Dorsolateral prefrontal cortex (tissue), 120 donors: ENCODE measurements at regions of chr6 and their contacts with region 1.

Region 1: GRCh38 chr6:43506667-43507471 is 3.3 kb downstream of the LRRC73 start:
- DNase-seq: peak in 9 of 10 donors; percentile 68 to 85 (median 83)
- H3K4me3 ChIP-seq: peak overlapping the region in 3 of 59 donors; percentile 11 to 16 (median 13)
- H3K27ac ChIP-seq: peak overlapping the region in 51 of 59 donors; percentile 23 to 85 (median 69)
- H3K27me3 ChIP-seq: no peaks in the 10 kb centered on the region
- CTCF ChIP-seq: peak; percentile 85 to 99 (median 96)

Region 2: GRCh38 chr6:42563697-42564505 is 943.0 kb before region 1 on chr6 and contains the start of gene UBR2:
- intact Hi-C with region 1: no loop called
- DNase-seq: peak; percentile 90 to 99 (median 98)
- H3K4me3 ChIP-seq: peak within 1 kb of the TSS; percentile 57 to 100 (median 92)
- H3K27ac ChIP-seq: peak within 1 kb of the TSS; percentile 69 to 100 (median 97)
- H3K27me3 ChIP-seq: no peaks in the 10 kb centered on the region
- CTCF ChIP-seq: peak in 55 of 56 donors; percentile 29 to 86 (median 67)
- total RNA-seq, gene UBR2: 29.5 to 56.9 (median 37.2) TPM

Region 3: GRCh38 chr6:43174263-43175112 is 332.4 kb before region 1 on chr6:
- intact Hi-C with region 1: loop called in 1 of 2 experiments (anchors 5 kb)
- DNase-seq: peak; percentile 88 to 99 (median 98)
- H3K4me3 ChIP-seq: peak overlapping the region; percentile 29 to 98 (median 81)
- H3K27ac ChIP-seq: peak overlapping the region; percentile 50 to 98 (median 90)
- H3K27me3 ChIP-seq: no peaks in the 10 kb centered on the region
- CTCF ChIP-seq: peak in 50 of 56 donors; percentile 8 to 67 (median 42)

Region 4: DNA sequence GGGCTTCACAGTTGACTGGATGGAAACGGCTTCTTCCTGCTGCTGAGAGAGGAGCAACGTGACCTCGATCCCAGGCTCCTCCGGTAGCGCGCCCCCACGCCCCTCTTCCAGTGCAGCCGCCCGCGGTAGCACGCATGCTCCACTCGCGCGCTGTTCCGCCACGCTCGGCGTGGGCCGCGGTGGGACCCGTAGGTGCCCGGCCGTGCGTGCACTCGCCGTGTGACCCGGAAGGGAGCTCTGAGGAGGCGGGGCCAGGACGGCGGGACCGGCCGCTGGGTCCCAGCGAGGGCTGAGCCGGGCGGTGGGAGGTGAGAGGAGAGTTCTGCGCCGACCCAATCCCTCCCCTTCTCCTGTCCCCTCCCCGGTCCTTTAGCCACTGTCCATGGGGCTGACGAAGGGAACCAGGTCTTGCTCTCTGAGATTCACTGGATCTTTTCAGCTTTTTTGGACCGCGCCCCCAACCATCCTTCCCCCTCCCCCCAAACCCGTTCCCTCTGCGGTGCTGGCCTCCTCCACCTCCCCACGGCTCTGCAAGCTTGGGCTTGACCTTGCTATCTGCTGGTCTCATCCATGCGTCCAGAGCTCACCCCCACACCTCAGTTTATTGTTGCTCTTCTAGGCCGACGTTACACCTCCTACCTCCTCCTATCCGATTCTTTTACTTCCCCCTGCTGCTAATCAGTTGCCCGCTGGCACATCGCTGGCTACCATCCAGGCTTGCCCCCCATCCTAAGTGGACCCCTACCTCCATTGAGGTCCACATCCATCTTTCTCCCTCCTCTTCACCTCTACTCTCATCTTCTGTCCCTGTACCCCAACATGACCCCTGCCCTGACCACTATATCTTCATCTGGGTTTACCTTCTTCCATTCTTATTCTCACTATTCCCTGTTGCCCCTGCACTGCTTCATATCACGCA is 324.7 kb before region 1 on chr6 and contains the start of gene CUL9:
- intact Hi-C with region 1: loop called in 1 of 2 experiments (anchors 10 kb)
- DNase-seq: peak; percentile 74 to 95 (median 86)
- H3K4me3 ChIP-seq: peak within 1 kb of the TSS; percentile 57 to 93 (median 83)
- H3K27ac ChIP-seq: peak within 1 kb of the TSS in 57 of 59 donors; percentile 24 to 91 (median 82)
- H3K27me3 ChIP-seq: no peaks in the 10 kb centered on the region
- CTCF ChIP-seq: peak in 43 of 56 donors; percentile 6 to 58 (median 34)
- total RNA-seq, gene CUL9: 57.4 to 123 (median 84.1) TPM

Region 5: GRCh38 chr6:43263314-43264178 is 243.3 kb before region 1 on chr6:
- intact Hi-C with region 1: loop called (anchors 5 to 10 kb)
- DNase-seq: peak in 8 of 10 donors; percentile 47 to 73 (median 62)
- H3K4me3 ChIP-seq: no peak overlapping the region
- H3K27ac ChIP-seq: peak overlapping the region in 17 of 59 donors; percentile 3 to 58 (median 31)
- H3K27me3 ChIP-seq: no peaks in the 10 kb centered on the region
- CTCF ChIP-seq: peak in 55 of 56 donors; percentile 16 to 69 (median 53)

Region 6: DNA sequence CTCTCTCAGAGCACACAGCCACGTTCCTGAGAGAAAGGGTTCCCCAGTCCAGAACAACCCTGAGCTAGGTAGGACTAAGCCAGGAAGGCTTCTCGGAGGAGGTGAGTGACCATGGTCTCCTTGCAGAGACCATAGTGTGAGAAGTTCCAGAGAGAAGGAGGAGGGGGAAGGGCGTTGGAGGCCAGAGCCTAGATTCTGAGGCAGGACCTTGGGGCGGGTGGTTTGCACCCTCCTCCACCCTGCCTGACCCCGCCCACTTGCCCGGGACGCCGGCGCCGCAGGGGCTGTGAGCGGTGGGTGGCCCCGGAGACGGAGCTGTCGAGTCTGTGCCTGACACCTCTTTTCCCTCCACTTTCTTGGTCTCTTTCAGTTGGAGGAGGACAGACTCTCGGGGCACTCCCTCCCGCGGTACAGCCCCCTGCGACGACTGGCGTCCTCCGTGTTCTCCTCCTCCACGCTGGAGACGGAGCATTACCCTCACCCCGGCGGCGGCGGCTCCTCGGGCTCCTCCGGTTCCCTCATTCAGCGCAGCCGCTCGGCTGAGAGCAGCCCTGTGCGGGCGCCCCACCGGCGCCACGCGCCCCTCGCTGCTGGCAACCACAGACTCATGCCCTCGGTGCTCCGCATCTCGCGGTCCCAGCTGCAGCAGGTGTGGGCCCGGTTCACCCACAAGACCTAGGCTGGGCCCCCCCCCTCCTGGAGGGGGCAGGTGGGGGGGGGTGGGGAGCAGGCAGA is 237.4 kb before region 1 on chr6:
- intact Hi-C with region 1: loop called (anchors 5 to 10 kb)
- DNase-seq: no peak
- H3K4me3 ChIP-seq: peak overlapping the region in 29 of 59 donors; percentile 4 to 52 (median 22)
- H3K27ac ChIP-seq: peak overlapping the region in 50 of 59 donors; percentile 0 to 94 (median 81)
- H3K27me3 ChIP-seq: no peaks in the 10 kb centered on the region
- CTCF ChIP-seq: no peak

Region 7: GRCh38 chr6:43454696-43455530 is 52.0 kb before region 1 on chr6:
- intact Hi-C with region 1: loop called (anchors 2 kb)
- DNase-seq: peak; percentile 48 to 94 (median 86)
- H3K4me3 ChIP-seq: peak overlapping the region; percentile 38 to 80 (median 63)
- H3K27ac ChIP-seq: peak overlapping the region in 47 of 59 donors; percentile 2 to 87 (median 63)
- H3K27me3 ChIP-seq: peaks cover 0 to 6% (median 0%) of the 10 kb centered on the region in 45 donors
- CTCF ChIP-seq: peak in 21 of 56 donors; percentile 2 to 51 (median 14)

Region 8: DNA sequence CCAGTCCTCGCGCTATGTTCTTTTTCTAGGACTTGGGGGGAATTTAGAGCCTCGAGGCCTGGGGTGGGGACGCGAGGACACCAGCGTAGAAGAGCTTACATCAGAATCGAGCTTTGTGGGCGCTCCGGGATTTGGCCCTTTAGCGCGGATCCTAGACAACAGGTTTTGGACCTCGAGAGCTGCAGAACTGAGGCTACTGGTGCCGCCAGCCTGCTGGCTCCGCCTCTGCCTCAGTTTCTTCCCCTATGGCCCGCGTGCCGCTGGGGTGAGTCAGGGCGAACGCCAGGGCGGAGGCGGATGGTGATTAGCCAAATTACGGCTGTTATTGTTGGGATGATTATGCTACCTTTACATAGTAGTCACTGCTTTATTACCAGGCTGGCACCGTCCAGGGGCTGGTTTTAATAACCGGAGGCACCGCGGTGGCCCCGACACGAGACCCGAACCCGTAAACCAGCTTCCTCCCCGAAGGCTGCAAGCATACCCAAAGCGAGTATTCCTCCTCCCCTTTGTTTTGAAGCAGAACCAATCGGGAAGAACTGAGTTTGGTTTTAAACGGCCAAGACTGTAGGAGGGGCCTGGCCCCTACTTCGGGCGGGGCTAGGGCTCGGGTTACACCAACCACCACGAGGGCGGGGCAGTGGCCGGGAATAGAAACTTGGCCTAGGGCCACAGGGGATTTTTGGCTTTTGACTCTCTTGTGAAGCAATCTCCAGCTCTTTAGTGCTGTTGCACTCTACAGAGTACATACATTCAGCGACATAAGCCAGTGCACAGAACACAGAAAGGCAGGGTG is 122.8 kb after region 1 on chr6:
- intact Hi-C with region 1: loop called in 1 of 2 experiments (anchors 5 kb)
- DNase-seq: peak; percentile 61 to 93 (median 90)
- H3K4me3 ChIP-seq: peak overlapping the region; percentile 64 to 99 (median 94)
- H3K27ac ChIP-seq: peak overlapping the region; percentile 74 to 100 (median 97)
- H3K27me3 ChIP-seq: no peaks in the 10 kb centered on the region
- CTCF ChIP-seq: peak in 5 of 56 donors; percentile 0 to 9 (median 2)